ENCODE measurements at regions of chr1 and their contacts with region 1.

Region 1: DNA sequence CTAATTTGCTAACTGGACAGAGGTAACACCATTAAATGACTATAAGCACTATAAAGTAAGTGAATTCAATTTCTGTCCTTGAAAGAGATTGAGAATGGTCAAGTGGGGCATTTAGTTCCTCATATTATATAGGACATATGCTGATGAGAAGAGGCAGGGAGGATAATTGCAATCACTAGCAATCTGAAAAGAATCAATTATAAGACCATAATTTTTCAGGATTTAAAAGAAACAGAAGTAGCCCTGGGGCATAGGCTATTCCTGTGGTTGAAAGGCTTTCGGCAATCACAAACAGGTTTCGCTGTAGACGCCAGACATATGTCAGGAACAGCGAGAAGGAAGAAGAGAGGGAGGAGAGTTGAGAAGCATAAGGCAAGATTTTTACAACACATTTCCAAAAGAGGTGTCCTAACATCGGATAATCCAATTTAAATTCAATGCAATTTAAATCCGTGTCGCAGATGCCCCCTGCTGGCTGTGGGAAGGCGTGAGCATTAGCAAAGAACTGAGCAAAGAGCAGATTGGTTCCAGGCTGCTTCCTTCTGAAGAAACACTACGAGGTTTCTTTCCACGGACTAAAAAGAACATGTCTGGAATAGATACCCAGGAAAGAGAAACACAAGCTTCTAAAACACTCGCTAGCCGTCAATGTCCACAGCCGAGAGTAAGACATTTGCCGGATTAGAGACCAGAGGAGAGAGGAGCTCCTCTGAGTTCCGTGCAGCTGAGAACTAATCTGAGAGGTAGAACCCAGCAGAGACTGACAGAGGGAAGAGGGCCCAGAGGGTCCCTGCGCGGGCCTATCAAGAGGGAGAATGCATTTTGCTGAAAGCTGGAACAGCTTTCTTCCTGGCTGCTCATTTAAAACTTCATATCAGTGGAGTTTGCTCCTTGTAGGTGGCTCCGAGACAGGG is 27.9 kb downstream of the RGS5 start:
- DNase-seq: peak; percentile 40
- CTCF ChIP-seq: peak; percentile 86

Region 2: GRCh38 chr1:162847839-162848453 is 326.8 kb before region 1 on chr1:
- CTCF ChIA-PET with region 1: interaction called, 15 read pairs
- POLR2A ChIA-PET with region 1: no interaction called
- DNase-seq: peak; percentile 67
- CTCF ChIP-seq: peak; percentile 92

Region 3: GRCh38 chr1:162854245-162854882 is 320.4 kb before region 1 on chr1:
- CTCF ChIA-PET with region 1: interaction called, 15 read pairs
- POLR2A ChIA-PET with region 1: no interaction called
- DNase-seq: peak; percentile 53
- CTCF ChIP-seq: peak; percentile 73

Region 4: GRCh38 chr1:163163861-163164582 is 10.8 kb before region 1 on chr1:
- CTCF ChIA-PET with region 1: interaction called, 22 read pairs
- POLR2A ChIA-PET with region 1: no interaction called
- DNase-seq: no peak
- CTCF ChIP-seq: no peak

Region 5: DNA sequence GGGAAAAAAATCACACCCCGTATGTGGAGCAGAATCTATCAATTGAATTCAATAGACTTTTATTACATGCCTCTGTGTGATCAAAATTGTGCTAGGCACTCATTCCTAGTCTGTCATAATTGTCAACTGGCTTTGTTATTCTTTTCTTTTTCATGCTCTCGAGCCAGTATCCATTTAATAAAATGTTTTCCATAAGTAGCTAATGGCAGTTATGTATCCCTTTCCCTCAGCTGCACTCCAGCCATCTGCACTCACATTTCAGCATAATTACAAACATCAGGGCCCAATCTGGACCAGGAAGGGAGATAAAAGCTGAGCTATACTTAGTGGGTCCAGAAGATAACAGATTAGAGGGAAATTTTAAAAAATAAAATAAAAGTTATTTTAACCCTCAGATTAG is 12.1 kb after region 1 on chr1:
- CTCF ChIA-PET with region 1: interaction called, 10 read pairs
- POLR2A ChIA-PET with region 1: no interaction called
- DNase-seq: no peak
- CTCF ChIP-seq: no peak

Region 6: GRCh38 chr1:163231385-163231784 is 56.6 kb after region 1 on chr1:
- CTCF ChIA-PET with region 1: no interaction called
- POLR2A ChIA-PET with region 1: no interaction called
- DNase-seq: no peak
- CTCF ChIP-seq: no peak